ENCODE measurements at regions of chr17 and their contacts with region 1.

Region 1: DNA sequence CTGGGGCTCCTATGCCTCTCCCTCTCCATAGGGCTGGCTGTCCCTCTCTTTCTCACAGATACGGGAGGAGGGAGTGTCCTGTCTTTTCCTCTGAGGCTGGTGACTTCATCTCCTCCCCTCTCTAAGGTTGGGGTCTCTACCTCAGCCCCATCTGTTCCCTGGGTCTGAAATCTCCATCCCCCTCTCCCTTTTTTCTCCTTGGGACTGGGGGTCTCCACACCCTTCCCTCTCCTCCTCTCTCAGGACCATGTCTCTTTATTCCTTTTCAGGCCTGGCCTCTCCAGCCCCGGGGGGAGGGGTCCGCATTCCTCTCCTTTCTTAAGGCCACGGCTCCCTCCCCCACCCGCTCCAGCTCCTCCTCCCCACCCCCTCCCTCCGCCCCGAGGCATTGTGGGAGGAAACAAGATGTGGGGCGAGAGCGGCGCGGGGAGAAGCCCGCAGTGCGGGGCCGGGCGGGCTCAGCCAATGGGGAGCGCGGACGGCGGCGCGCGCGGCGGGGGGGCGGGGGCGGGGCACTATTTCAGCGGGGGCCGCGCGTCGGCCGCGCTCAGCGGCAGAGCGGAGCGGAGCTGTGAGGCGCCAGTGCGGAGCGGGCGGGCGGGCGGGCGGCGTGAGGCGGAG is at the start of gene DYNLL2:
- DNase-seq: peak; percentile 64 to 86
- H3K4me3 ChIP-seq: peak within 1 kb of the TSS; percentile 86
- H3K27ac ChIP-seq: no peak within 1 kb of the TSS
- H3K4me1 ChIP-seq: peaks cover 17% of the 10 kb centered on the region
- H3K27me3 ChIP-seq: peaks cover 5% of the 10 kb centered on the region; the same call in 1 of the 2 replicates
- CTCF ChIP-seq: no peak
- total RNA-seq, gene DYNLL2: 29.3 and 36.2 TPM in 2 replicates

Region 2: DNA sequence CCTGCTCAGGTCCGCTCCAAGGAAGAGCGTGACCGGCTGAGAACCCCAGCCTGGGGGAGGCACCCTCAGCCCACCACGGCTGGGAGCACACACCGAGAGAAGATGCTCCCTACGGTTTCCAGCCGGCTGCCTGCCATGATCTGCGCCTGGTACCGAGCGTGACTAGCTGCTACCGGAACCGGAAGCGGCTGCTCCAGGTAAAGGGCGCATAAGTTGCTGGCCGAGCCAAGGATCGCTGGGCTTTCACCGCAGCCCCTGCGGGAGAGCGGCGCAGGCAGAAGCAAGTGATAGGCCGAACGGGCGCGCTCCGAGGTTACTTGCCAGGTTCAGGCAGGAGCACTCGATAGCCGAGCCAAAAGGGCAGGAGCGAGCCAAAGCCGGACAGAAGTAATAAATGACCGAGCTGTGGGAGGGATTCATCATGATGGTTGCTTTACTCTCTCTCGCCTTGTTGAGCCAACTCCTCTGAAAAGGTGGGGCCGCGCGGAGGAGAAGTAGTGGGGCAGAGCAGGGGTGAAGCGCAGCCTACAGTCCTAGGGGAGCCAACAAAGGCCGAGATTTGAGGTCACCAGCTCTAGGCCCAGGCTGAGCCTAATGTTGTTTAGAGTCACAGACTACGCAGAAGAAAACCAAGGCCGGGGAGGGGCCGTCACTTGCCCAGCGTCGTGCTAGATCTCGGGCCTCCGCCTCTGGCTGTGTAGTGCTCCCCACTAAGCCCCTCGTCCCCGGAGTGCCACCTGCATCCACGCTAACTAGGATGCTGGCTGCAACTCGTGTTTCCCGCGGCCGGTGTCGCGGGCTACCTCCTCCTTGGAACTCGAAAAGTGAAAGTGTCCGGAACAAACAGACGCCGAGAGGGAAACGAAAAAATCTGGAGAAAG is 232.9 kb before region 1 on chr17 and contains the start of gene MRPS23:
- CTCF ChIA-PET with region 1: no interaction called
- POLR2A ChIA-PET with region 1: no interaction called
- intact Hi-C with region 1: loop called (anchors 10 kb)
- DNase-seq: peak; percentile 95 to 98
- H3K4me3 ChIP-seq: peak within 1 kb of the TSS; percentile 72
- H3K27ac ChIP-seq: peak within 1 kb of the TSS; percentile 56
- H3K4me1 ChIP-seq: peaks cover 24% of the 10 kb centered on the region
- H3K27me3 ChIP-seq: no peaks in the 10 kb centered on the region
- CTCF ChIP-seq: no peak
- total RNA-seq, gene MRPS23: 49.7 and 50.3 TPM in 2 replicates

Region 3: DNA sequence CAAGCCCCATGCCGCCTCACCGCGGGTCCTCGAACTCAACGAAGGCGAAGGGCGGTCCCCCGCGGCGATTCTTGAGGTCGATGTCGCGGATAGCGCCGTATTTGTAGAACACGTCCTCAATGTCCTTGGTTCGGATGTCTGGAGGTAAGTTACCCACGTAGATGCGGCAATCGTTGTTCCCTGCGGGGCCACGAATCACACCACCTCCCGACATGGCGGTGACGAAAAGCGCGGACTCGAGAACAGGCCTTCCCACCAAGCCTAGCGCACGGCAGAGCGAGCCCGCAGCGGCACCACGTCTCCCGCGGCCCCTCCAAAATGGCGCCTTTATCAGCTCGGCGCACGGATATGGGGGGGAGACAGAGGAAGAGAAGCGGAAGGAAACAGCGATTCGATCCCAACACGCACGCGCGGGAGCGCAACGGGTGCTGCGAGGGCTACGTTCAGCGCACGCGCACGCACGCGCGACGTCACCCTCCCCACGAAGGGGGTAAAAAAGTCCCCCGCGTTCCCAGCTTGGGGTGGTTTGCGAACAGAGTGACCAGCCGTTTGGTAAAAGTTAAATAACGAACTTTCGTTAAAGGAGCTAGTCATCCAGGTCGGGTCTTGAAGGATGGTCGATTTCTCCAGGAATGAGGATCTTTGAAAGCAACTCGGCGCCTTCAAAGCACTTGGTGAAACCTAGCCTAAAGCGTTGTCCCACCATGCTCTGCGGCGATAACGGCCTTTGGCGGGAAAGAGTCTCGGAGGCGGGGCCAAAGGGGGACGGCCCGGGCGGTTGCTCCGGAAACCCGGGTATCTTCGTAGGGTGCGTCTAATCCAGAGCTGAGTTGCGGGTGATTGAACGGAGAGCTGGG is 75.8 kb before region 1 on chr17 and contains the start of gene SRSF1:
- CTCF ChIA-PET with region 1: no interaction called
- POLR2A ChIA-PET with region 1: interaction called, 9 read pairs
- intact Hi-C with region 1: loop called (anchors 1 kb)
- DNase-seq: peak; percentile 95 to 96
- H3K4me3 ChIP-seq: peak within 1 kb of the TSS; percentile 95
- H3K27ac ChIP-seq: peak within 1 kb of the TSS; percentile 95
- H3K4me1 ChIP-seq: peaks cover 38% of the 10 kb centered on the region
- H3K27me3 ChIP-seq: no peaks in the 10 kb centered on the region
- CTCF ChIP-seq: 0 out of 2 replicates have a peak, but pooled peaks have one; percentile 8
- total RNA-seq, gene SRSF1: 210 and 278 TPM in 2 replicates

Region 4: GRCh38 chr17:58020401-58020800 is 62.6 kb before region 1 on chr17:
- CTCF ChIA-PET with region 1: interaction called, 4 read pairs
- POLR2A ChIA-PET with region 1: no interaction called
- intact Hi-C with region 1: loop called (anchors 5 kb)
- DNase-seq: no peak
- H3K4me3 ChIP-seq: no peak overlapping the region
- H3K27ac ChIP-seq: no peak overlapping the region
- H3K4me1 ChIP-seq: peaks cover 30% of the 10 kb centered on the region
- H3K27me3 ChIP-seq: no peaks in the 10 kb centered on the region
- CTCF ChIP-seq: no peak

Region 5: DNA sequence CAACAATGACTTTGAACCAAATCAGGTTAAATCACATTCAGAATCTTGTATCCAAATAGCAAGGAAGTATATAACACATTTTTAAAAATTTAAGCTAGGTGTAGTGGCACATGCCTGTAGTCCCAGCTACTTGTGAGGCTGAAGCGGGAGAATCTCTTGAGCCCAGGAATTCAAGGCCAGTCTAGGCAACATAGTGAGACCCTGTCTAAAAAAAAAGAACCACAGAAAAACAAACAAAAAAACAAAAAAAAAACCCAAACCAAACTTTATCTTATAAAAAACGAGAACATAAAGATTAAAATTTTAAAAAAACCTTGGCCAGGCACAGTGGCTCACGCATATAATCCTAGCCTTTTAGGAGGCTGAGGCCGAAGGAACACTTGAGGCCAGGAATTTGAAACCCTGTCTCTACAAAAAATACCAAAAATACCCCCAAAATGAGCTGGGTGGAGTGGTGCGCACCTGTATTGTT is 257.5 kb after region 1 on chr17:
- CTCF ChIA-PET with region 1: no interaction called
- POLR2A ChIA-PET with region 1: interaction called, 20 read pairs
- intact Hi-C with region 1: no loop called
- DNase-seq: no peak
- H3K4me3 ChIP-seq: no peak overlapping the region
- H3K27ac ChIP-seq: no peak overlapping the region
- H3K4me1 ChIP-seq: no peaks in the 10 kb centered on the region
- H3K27me3 ChIP-seq: no peaks in the 10 kb centered on the region
- CTCF ChIP-seq: no peak

Measured in PC-9 (cell line).